ENCODE measurements at regions of chr15 and their contacts with region 1.

Region 1: GRCh38 chr15:40069178-40070165 is 30.5 kb upstream of the SRP14 start:
- DNase-seq: peak; percentile 93 to 98
- ATAC-seq: peak; percentile 92 to 95
- H3K4me3 ChIP-seq: no peak overlapping the region
- H3K27ac ChIP-seq: peak overlapping the region; percentile 76 to 88 (median 82)
- H3K4me1 ChIP-seq: peaks cover 20 to 30% of the 10 kb centered on the region in 2 donors
- H3K27me3 ChIP-seq: no peaks in the 10 kb centered on the region
- CTCF ChIP-seq: no peak
- POLR2A ChIP-seq: no peak

Region 2: DNA sequence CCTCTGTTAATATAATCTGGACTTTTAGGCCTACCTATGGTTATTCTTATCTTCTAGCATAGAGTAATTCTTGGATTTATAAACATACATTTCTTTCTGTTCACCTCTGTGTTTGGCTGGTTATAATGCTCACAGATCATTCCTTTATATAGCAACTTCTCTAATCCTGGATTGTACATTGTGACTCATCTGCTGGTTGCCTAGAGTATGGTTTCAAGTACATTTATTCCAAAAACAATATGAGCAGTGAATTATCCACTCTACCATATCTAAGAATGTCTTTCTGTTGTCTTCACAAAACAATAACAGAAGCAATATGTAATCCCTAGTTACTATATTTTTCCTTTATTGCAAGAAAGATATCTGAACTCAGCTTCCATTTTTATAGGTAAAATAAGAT is 322.1 kb before region 1 on chr15:
- in situ Hi-C with region 1: no loop called
- intact Hi-C with region 1: no loop called
- DNase-seq: no peak
- ATAC-seq: peak; percentile 68 to 86
- H3K4me3 ChIP-seq: no peak overlapping the region
- H3K27ac ChIP-seq: peak overlapping the region in 2 of 4 donors; percentile 37 to 51
- H3K4me1 ChIP-seq: peaks cover 0 to 12% of the 10 kb centered on the region in 2 donors
- H3K27me3 ChIP-seq: no peaks in the 10 kb centered on the region
- CTCF ChIP-seq: no peak
- POLR2A ChIP-seq: no peak

Region 3: GRCh38 chr15:40150163-40150925 is 80.9 kb after region 1 on chr15:
- in situ Hi-C with region 1: no loop called
- intact Hi-C with region 1: loop called (anchors 2 kb)
- DNase-seq: peak; percentile 64 to 82
- ATAC-seq: peak; percentile 96 to 97
- H3K4me3 ChIP-seq: no peak overlapping the region
- H3K27ac ChIP-seq: peak overlapping the region; percentile 61 to 83 (median 78)
- H3K4me1 ChIP-seq: peaks cover 18 to 22% of the 10 kb centered on the region in 2 donors
- H3K27me3 ChIP-seq: no peaks in the 10 kb centered on the region
- CTCF ChIP-seq: no peak
- POLR2A ChIP-seq: no peak

Measured in gastrocnemius medialis (tissue), 4 donors.